ENCODE measurements at regions of chr16 and their contacts with region 1.

Region 1: DNA sequence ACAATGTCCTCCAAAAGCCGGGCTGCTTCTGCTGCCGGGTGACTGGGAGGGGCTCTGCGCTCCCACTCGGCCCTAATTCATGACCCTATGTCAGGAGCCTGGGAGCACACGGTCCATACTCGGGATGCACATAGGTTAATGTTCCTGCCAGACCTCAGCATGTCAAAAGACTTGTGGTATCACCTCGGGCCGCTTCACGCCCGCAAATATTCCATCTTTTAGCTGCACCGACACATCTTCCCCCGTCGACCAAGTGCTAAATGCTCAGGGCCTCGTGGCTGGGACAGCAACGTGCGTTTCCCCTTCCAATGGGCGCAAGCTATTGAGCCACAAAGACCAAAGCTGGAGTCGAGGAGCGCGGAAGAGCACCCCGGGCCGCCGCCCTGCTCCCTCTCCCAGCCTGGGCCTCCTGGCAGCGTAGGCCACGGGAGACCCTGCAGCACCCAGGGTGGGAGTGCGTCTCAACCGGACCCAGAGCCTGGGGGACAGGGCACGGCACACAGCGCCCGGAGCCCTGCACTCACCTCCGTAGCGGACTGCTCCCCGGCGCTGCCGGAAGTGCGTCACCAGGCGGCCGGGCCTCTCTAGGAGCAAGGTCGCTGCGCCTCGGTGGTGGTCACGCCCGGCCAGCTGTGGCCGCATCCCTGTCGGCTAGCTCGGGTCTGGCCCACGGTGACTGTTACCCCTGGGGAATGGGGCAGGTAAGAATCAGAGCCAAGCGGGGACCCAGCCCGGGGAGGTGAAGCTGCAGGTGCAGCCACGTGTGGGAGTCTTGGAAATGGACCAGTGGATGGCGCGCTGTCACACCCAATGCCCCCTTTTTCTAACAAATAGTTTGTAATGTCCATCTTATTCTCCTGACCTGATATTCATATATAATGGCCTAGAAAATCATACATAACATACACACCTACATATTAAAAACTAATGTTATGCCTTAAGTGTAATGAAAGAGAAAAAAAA is at the start of gene ZNF23:
- DNase-seq: peak; percentile 90
- ATAC-seq: peak; percentile 99 to 100
- total RNA-seq, gene ZNF23: 5.8 to 6.5 TPM

Region 2: DNA sequence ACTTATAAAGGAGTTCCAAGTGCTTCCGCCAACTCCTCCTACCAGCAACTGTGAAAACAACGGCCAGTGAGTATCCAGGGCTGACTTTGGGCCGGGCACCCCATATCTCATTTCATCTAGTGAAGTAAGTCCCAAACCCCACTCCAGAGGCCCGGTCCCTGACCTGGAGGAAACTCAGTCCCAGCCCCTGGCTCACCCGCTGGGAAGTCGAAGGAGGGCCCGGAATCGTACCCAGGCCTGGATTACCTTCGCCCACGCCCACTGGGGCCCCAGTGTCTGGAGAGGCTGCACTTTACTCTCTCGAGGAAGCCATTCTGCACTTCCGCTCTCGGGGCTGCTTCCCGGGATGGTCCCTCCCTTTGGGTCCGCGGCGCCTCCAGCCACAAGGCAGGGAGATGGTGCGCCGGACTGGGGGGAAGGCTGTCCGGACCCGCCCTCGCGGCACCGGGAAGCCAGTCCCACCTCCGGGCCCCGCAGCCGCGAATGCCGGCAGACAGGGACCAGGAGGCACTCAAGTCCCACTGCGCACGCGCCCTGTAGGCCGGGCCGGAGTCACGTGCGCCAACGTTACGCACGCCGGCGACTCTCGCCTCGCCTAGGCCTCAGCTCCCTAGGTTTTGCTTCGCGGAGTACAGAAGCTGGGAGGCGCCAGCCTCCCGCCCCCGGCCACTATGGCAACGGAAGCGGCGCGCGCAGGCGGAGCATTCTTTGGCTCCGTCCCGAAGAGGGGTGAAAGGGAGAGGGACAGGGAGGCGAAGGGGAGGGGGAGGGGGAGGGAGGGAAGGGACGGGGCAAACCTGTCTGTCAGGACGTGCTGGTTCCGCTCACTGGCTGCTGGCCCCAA is 172.9 kb before region 1 on chr16 and contains the start of gene CMTR2:
- intact Hi-C with region 1: loop called in 1 of 2 experiments (anchors 10 kb)
- DNase-seq: peak; percentile 97
- ATAC-seq: peak; percentile 99
- total RNA-seq, gene CMTR2: 10.4 to 11.3 TPM

Region 3: DNA sequence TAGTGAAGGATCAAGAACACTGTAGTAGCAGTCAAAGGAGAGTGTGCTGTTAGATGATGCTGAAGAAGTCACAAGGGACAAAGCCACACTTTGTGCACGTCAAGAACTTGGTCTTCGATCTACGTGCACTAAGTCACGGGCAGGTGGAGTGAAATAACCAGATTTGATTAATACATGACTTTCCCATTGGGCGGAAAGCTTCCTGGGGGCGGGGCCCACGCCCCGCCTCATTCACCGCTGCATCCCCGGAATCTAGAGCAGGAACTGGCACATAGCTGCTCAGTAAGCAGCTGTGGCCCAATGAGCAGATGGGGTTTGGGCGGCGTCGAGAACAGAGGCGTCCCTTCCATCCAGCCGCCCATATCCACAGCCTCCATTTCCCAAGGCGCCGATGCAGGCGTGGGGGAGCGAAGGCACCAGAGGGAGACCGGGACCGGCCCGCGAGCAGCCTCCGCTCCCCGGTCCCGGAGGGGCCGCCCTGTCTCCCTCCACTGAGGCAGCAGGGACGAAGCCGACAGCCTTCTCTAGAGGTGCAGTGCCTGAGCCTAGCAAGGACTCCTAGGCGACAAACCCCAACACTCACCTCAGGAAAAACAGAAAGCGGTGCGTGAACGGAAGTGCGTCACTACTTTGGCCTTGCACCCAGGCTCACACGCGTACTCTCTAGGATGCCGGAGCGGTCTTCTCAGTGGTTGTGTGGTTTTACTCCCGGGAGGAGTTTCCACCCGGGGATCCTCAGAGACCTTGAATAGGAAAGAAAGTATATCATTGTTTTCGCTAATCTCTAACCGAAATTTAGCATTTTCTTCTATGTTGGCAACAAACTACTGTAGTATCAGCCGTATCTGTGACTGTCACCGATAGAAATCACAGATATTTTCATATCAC is 22.3 kb after region 1 on chr16:
- intact Hi-C with region 1: loop called in 1 of 2 experiments (anchors 1 kb)
- DNase-seq: peak; percentile 90
- ATAC-seq: peak; percentile 97 to 99